ENCODE measurements at regions of chr7 and their contacts with region 1.

Region 1: DNA sequence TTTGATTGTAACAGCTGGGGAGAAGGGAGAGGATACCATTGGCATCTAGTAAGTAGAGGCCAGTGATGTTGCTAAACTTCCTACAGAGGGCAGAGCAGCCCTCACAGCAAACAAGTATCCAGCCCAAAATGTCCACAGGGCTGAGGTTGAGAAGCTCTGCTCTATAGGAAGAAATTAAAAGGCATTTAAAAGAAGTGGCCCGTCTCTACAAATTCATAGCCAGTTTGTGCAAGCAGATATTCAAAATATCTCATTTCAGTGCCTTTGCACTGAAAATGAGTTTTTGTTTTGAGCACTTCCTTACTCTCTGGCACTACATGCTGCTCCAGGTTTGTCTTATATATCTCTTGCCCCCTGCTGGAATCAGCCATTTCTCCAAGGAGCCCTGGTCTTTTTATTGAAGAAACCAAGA is 330.0 kb downstream of the BBS9 start:
- DNase-seq: peak in 1 of 2 experiments; percentile 20
- H3K4me3 ChIP-seq: no peak overlapping the region
- H3K4me3 Mint-ChIP-seq: no peak overlapping the region
- H3K27ac Mint-ChIP-seq: no peak overlapping the region
- H3K4me1 ChIP-seq: no peaks in the 10 kb centered on the region
- H3K4me1 Mint-ChIP-seq: no peaks in the 10 kb centered on the region
- H3K27me3 ChIP-seq: no peaks in the 10 kb centered on the region
- H3K27me3 Mint-ChIP-seq: no peaks in the 10 kb centered on the region
- CTCF ChIP-seq: peak; percentile 51 to 64

Region 2: DNA sequence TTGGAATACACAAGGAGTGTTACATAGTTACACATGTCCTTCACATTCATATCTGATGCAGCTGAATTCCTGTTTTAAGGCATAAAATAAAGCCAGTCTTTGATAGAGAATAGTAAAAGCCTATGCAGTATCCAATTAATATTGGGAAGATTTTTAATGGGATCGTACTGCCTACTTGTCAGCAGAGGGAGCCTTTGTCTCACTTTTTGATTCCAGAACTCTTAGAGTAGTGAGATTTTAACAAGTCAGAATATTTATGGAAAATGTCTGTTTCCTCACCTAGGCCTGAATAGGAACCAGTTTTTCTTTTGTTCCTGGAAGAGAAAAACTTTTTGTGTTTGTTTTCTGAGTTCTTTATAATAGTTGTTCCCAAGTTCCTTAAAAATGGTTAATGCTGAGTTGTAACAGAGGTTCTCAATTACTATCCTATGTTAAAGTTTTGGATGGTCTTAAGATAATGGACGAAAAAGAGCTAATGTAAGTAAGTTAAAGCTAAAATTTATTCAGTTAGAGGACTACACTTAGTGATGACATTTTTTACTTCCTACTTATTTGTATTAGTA is 215.9 kb before region 1 on chr7:
- CTCF ChIA-PET with region 1: no interaction called
- POLR2A ChIA-PET with region 1: no interaction called
- intact Hi-C with region 1: loop called (anchors 1 kb)
- DNase-seq: peak in 1 of 2 experiments; percentile 15
- H3K4me3 ChIP-seq: no peak overlapping the region
- H3K4me3 Mint-ChIP-seq: no peak overlapping the region
- H3K27ac Mint-ChIP-seq: no peak overlapping the region
- H3K4me1 ChIP-seq: no peaks in the 10 kb centered on the region
- H3K4me1 Mint-ChIP-seq: no peaks in the 10 kb centered on the region
- H3K27me3 ChIP-seq: no peaks in the 10 kb centered on the region
- H3K27me3 Mint-ChIP-seq: peaks cover 3% of the 10 kb centered on the region
- CTCF ChIP-seq: peak; percentile 56 to 68

Region 3: GRCh38 chr7:33334349-33334748 is 125.0 kb before region 1 on chr7:
- CTCF ChIA-PET with region 1: no interaction called
- POLR2A ChIA-PET with region 1: no interaction called
- intact Hi-C with region 1: loop called (anchors 1 kb)
- DNase-seq: peak in 1 of 2 experiments; percentile 33
- H3K4me3 ChIP-seq: no peak overlapping the region
- H3K4me3 Mint-ChIP-seq: no peak overlapping the region
- H3K27ac Mint-ChIP-seq: no peak overlapping the region
- H3K4me1 ChIP-seq: no peaks in the 10 kb centered on the region
- H3K4me1 Mint-ChIP-seq: no peaks in the 10 kb centered on the region
- H3K27me3 ChIP-seq: no peaks in the 10 kb centered on the region; the same call in 1 of the 2 replicates
- H3K27me3 Mint-ChIP-seq: peaks cover 8% of the 10 kb centered on the region
- CTCF ChIP-seq: peak; percentile 30 to 58

Region 4: DNA sequence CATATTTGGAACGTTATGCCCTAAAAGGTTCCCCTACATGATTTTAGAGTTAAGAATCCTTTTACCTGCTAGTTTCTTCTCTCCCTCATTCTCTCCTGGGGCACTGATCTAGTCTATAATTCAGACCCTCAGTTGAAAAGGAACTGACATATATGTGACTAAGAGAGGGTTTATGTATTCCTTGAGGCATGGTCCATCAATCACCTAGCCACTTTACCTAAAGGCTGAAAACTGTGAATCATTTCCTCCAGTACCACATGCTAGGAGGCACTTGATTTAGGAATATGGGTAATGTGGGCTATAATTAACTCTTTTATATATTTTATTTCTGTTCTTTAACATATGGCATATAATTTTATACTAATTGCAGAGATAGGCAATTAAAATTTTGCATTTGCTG is 26.5 kb before region 1 on chr7:
- CTCF ChIA-PET with region 1: no interaction called
- POLR2A ChIA-PET with region 1: no interaction called
- intact Hi-C with region 1: no loop called
- DNase-seq: no peak
- H3K4me3 ChIP-seq: no peak overlapping the region
- H3K4me3 Mint-ChIP-seq: no peak overlapping the region
- H3K27ac Mint-ChIP-seq: no peak overlapping the region
- H3K4me1 ChIP-seq: no peaks in the 10 kb centered on the region
- H3K4me1 Mint-ChIP-seq: no peaks in the 10 kb centered on the region
- H3K27me3 ChIP-seq: no peaks in the 10 kb centered on the region
- H3K27me3 Mint-ChIP-seq: no peaks in the 10 kb centered on the region
- CTCF ChIP-seq: no peak

Region 5: GRCh38 chr7:33444511-33444910 is 14.8 kb before region 1 on chr7:
- CTCF ChIA-PET with region 1: no interaction called
- POLR2A ChIA-PET with region 1: no interaction called
- intact Hi-C with region 1: no loop called
- DNase-seq: no peak
- H3K4me3 ChIP-seq: no peak overlapping the region
- H3K4me3 Mint-ChIP-seq: no peak overlapping the region
- H3K27ac Mint-ChIP-seq: no peak overlapping the region
- H3K4me1 ChIP-seq: no peaks in the 10 kb centered on the region
- H3K4me1 Mint-ChIP-seq: no peaks in the 10 kb centered on the region
- H3K27me3 ChIP-seq: no peaks in the 10 kb centered on the region
- H3K27me3 Mint-ChIP-seq: peaks cover 8% of the 10 kb centered on the region
- CTCF ChIP-seq: no peak

Region 6: GRCh38 chr7:33623267-33623666 is 163.9 kb after region 1 on chr7:
- CTCF ChIA-PET with region 1: no interaction called
- POLR2A ChIA-PET with region 1: no interaction called
- intact Hi-C with region 1: no loop called
- DNase-seq: no peak
- H3K4me3 ChIP-seq: no peak overlapping the region
- H3K4me3 Mint-ChIP-seq: no peak overlapping the region
- H3K27ac Mint-ChIP-seq: no peak overlapping the region
- H3K4me1 ChIP-seq: no peaks in the 10 kb centered on the region
- H3K4me1 Mint-ChIP-seq: no peaks in the 10 kb centered on the region
- H3K27me3 ChIP-seq: no peaks in the 10 kb centered on the region
- H3K27me3 Mint-ChIP-seq: no peaks in the 10 kb centered on the region
- CTCF ChIP-seq: no peak

Measured in Caco-2 (cell line).